ENCODE measurements at regions of chr11 and their contacts with region 1.

Region 1: GRCh38 chr11:13261591-13262061 is 16.0 kb upstream of the BMAL1 start:
- DNase-seq: peak; percentile 49
- H3K4me3 ChIP-seq: no peak overlapping the region
- CTCF ChIP-seq: no peak

Region 2: DNA sequence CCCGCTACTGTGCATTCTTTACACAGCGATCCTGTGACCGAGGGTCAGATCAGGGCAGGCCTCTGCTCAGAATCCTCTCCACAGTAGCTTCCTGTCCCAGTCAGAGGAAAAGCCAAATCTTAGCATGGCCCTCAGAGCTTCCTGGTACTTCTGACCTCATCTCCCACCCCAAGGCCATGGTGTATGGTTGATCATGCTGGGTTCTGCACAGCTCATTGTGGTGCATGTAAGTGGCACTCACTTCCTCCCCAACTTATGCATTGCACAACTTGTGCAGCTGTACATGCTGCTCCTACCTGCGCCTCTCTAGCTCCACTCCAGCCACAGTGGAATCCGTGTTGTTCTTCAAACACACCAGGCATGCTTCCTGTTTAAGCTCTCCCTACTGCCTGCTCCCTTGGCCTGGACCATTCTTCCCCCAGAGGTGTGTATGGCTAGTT is 36.3 kb after region 1 on chr11:
- in situ Hi-C with region 1: loop called (anchors 5 kb)
- DNase-seq: no peak
- H3K4me3 ChIP-seq: no peak overlapping the region
- CTCF ChIP-seq: no peak

Measured in astrocyte of the cerebellum (primary cell).